ENCODE measurements at regions of chr4 and their contacts with region 1.

Region 1: DNA sequence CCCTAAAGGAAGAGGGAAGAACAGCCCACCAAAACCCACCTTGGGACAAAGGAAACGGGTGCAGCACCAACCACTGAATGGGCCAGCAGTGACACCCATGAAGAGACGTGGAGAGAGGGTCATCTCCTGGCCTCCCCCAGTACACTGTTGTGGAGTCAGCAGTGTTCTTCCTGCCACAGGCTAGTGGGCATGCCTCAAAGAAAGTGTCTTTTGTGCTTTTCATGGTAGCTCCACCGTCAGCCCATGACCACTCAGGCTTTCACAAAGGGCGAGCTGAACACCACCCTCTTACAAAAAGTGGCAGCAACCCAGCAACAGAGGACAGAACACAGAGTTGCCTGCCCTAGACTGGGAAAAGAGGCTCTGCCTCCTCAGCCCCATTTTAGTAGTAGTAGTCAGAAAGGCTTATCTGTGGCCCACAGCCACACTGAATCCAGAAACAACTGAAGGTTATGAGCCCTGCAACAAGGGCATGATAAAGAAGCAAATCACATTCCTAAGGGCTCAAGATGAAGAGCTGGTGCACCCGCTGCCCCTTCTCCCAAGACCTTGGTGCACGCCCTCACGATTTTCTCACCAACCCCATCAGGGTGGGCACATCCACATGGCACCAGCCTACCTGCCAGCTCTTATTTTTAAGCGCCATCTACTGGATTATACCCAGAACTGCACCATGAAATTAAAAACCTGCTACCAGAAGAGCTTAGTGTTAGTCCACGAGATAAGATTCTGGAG is 53.1 kb downstream of the RAB28 start:
- DNase-seq: no peak
- H3K4me3 ChIP-seq: no peak overlapping the region
- H3K27ac ChIP-seq: no peak overlapping the region
- H3K4me1 ChIP-seq: no peaks in the 10 kb centered on the region
- H3K27me3 ChIP-seq: no peaks in the 10 kb centered on the region
- CTCF ChIP-seq: peak; percentile 1 to 6
- POLR2A ChIP-seq: no peak

Region 2: DNA sequence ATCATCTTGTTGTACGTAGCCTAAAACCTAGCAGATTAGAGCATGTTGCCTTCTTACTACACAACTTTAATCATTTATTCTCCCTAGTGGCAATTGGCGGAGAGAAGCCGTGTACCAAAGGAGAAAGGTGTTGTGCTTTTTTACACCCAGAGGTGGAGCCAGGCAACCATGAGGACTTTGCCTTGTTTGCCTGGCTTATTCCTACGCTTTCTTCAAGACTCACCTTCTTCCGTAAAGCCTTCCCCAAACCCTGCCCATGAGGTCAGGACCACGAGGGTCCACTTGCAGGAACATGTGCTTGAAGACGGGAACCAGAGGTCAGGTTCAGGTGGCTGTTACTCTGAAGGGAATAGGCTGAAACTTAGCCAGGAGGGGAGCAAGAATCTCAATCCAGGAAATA is 237.3 kb before region 1 on chr4:
- CTCF ChIA-PET with region 1: no interaction called
- POLR2A ChIA-PET with region 1: no interaction called
- dilution Hi-C with region 1: no loop called
- intact Hi-C with region 1: no loop called
- DNase-seq: no peak
- H3K4me3 ChIP-seq: no peak overlapping the region
- H3K27ac ChIP-seq: no peak overlapping the region
- H3K4me1 ChIP-seq: no peaks in the 10 kb centered on the region
- H3K27me3 ChIP-seq: no peaks in the 10 kb centered on the region
- CTCF ChIP-seq: no peak
- POLR2A ChIP-seq: no peak

Region 3: DNA sequence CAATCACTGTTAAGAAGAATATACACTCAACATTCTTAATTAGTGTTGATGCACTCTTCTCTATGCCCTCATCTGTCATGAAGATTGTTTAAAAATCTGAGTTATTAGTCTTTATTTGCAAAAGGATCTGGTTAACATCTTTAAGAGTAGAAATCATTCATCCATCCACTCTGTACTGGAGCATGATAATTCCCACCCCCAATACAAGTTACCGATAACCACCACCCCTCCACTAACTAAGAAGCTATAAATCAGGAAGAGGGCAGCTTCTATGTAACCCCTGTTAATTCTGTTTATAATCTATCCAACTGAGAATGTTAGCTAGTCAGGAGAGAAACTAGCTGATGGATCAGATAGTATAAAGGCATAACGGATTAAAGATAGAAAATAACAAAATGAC is 18.6 kb after region 1 on chr4:
- CTCF ChIA-PET with region 1: interaction called, 14 read pairs
- POLR2A ChIA-PET with region 1: no interaction called
- dilution Hi-C with region 1: no loop called
- intact Hi-C with region 1: no loop called
- DNase-seq: no peak
- H3K4me3 ChIP-seq: no peak overlapping the region
- H3K27ac ChIP-seq: no peak overlapping the region
- H3K4me1 ChIP-seq: no peaks in the 10 kb centered on the region
- H3K27me3 ChIP-seq: no peaks in the 10 kb centered on the region
- CTCF ChIP-seq: no peak
- POLR2A ChIP-seq: no peak

Region 4: DNA sequence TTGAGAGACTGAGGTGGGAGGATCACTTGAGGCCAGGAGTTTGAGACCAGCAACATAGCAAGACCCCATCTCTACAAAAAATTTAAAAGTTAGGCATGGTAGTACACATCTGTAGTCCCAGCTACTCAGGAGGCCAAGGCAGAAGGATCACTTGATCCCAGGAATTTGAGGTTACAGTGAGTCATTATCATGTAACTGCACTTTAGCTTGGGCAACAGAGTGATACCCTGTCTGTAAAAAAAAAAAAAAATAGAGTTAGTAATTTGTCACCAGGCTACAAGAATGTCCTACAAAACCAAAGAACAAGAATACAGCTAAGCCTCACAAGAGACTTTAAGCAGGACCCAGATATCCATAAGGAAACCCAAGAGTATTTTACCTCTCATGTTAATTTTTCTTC is 80.1 kb after region 1 on chr4:
- CTCF ChIA-PET with region 1: no interaction called
- POLR2A ChIA-PET with region 1: no interaction called
- dilution Hi-C with region 1: no loop called
- intact Hi-C with region 1: no loop called
- DNase-seq: no peak
- H3K4me3 ChIP-seq: no peak overlapping the region
- H3K27ac ChIP-seq: no peak overlapping the region
- H3K4me1 ChIP-seq: no peaks in the 10 kb centered on the region
- H3K27me3 ChIP-seq: peaks cover 11 to 17% of the 10 kb centered on the region in 2 experiments
- CTCF ChIP-seq: no peak
- POLR2A ChIP-seq: no peak